Activated CD8-positive, alpha-beta T cell treated with anti-CD3 and anti-CD28 coated beads for 36 hours (primary cell): ENCODE measurements at regions of chr3 and their contacts with region 1.

Region 1: DNA sequence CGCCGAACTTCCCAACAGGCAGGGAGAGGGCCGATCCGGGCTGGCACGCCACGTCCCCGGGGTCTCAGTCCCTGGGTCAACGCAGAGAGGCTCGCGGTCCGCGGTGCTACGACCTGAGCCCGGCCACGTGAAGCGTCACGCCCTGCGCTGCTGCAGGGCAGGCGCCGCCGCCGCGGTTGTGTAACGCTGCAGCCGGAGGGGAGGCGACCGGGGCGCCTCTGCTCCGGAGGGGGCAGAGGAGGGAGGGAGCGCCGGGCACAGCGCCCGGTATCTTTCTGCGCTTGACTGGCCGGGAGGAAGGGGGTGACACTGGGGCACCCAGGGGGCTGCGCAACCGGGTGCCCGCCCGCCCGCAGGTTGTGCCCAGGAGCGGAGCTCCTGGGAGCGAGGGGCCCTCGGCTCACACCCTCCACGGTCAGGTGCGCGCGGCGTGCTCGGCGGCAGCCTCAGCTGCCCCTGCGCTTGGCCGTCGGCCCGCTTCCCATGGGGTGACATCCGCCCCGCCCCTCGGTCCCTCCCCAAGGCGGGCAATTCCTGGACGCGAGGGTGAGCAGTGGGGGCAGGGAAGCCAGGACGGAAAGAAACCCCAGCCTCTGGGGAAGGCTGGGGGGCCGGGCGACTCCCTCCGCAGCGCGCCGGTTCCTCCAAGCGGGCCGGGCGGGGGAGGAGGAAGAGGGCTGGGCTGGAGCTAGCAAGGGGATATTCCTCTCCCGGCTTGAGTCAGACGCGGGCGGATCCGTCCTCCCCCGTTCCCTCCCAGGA is 852 bp upstream of the BHLHE40 start:
- DNase-seq: peak; percentile 98
- ATAC-seq: peak; percentile 57
- H3K4me3 Mint-ChIP-seq: peak overlapping the region; percentile 92
- H3K27ac Mint-ChIP-seq: peak overlapping the region; percentile 96
- H3K4me1 Mint-ChIP-seq: peaks cover 34% of the 10 kb centered on the region
- H3K27me3 Mint-ChIP-seq: no peaks in the 10 kb centered on the region
- CTCF ChIP-seq: no peak

Region 2: DNA sequence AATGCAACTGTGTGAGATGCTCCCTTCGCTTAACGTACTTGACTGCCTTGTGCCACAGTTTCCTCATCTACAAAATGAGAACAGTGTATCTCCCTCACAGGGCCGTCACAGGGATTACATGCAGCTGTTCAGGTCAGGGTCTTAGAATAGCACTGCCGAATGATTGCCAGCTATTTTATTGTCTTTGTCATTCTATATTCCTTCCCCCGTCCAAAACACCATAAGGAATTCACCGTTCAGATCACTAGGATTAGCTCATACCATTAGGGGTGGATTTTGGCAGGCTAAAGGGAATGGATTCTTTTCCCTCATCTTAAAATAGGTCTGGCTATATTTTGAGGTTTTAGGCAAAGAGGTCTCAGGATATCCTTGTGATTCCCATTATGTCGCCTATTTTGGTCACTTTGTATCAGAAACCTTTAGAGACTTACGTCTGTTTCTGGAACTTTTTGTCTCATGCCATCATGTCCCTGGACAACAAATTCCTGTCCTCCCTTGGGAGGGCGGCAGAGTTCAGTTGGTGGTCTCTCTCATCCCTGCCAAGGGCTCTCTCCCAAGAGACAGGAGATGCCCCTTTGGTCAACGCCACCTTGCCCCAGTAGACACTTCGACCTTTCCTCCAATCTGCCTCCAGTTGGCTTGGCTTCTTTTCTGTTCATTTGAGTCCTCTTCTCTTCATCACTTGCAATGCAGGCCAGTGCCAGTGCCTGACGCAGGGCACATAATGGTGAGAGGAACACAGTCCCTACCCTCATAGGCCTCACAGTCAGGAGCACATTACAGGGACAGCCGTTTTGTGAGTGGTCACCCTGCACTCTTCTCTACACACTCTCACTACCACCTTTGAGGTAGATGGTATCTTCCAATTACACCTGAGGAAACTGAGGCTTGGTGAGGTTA is 170.8 kb before region 1 on chr3:
- CTCF ChIA-PET with region 1: interaction called, 8 read pairs
- POLR2A ChIA-PET with region 1: interaction called, 14 read pairs
- intact Hi-C with region 1: no loop called
- DNase-seq: no peak
- ATAC-seq: no peak
- H3K4me3 Mint-ChIP-seq: no peak overlapping the region
- H3K27ac Mint-ChIP-seq: no peak overlapping the region
- H3K4me1 Mint-ChIP-seq: peaks cover 36% of the 10 kb centered on the region
- H3K27me3 Mint-ChIP-seq: no peaks in the 10 kb centered on the region
- CTCF ChIP-seq: no peak

Region 3: GRCh38 chr3:4866841-4867240 is 111.5 kb before region 1 on chr3:
- CTCF ChIA-PET with region 1: interaction called, 22 read pairs
- POLR2A ChIA-PET with region 1: interaction called, 8 read pairs
- intact Hi-C with region 1: no loop called
- DNase-seq: no peak
- ATAC-seq: no peak
- H3K4me3 Mint-ChIP-seq: peak overlapping the region; percentile 86
- H3K27ac Mint-ChIP-seq: peak overlapping the region; percentile 96
- H3K4me1 Mint-ChIP-seq: peaks cover 38% of the 10 kb centered on the region
- H3K27me3 Mint-ChIP-seq: no peaks in the 10 kb centered on the region
- CTCF ChIP-seq: no peak

Region 4: DNA sequence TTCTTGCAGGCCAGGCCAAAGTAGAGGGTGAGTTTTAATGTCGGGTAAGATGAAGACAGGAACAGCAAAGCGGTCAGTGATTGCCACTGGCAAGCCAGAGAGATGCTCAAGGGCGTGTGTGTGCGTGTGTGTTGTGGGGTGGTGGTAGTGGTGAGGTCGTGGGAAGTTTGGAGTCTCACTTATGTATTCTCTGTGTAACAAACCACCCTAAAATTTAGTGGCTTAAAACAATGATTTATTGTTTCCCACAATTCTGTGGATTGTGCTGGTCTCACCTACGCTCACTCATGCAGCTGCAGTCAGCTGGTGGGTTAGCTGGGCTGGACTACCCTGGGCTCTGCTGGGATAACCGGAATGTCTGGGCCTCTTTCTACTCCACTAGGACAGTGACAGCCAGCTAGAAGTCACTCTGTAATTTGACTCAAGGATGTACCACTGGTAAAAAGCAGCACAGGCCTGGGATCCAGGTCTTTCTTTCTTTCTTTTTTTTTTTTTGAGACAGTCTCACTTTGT is 50.1 kb before region 1 on chr3:
- CTCF ChIA-PET with region 1: interaction called, 4 read pairs
- POLR2A ChIA-PET with region 1: interaction called, 3 read pairs
- intact Hi-C with region 1: loop called (anchors 5 kb)
- DNase-seq: peak; percentile 55
- ATAC-seq: peak; percentile 18
- H3K4me3 Mint-ChIP-seq: no peak overlapping the region
- H3K27ac Mint-ChIP-seq: peak overlapping the region; percentile 35
- H3K4me1 Mint-ChIP-seq: peaks cover 29% of the 10 kb centered on the region
- H3K27me3 Mint-ChIP-seq: no peaks in the 10 kb centered on the region
- CTCF ChIP-seq: no peak

Region 5: DNA sequence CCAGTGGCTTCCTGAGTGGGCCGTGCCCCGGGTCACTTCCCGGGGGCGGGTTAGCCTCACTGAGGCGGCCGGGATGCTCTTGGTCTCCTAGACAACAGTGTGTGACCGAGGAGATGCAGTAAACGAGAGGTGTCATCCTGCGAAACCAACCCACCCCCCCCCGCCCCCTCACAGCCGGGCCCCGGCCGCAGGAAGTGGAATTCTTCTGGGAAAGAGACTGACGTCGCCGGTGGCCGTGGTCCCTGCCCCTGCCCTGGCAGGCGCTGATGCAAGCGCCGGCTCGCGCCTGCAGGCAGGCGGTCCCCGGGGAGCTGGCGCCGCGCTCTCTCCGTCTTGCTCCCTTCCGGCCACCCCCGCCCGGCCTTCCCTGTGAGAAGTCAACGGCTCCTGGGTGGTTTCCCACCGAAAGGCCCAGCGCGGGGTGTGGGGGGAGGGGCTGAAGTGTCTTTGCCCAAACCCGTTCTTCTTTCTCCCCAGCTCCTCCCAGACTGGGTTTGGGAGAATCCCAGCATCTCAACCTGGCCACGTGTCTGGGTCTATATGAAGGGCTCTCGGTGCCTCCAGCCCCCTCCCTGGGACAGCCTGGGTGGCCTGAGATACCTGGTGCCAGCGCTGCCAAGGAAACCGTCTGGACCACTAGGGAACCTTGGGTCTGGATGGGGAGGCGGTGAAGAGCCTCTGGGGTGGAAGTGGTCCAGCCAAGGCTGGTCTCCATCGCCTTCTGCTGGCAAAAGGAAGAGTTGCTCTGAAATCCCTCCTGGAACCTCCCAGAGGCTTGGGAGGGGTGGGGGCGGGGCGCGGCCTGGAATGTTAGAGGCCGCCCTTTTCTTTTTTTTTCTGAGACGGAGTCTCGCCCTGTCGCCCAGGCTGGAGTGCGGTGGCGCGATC is 48.2 kb after region 1 on chr3:
- CTCF ChIA-PET with region 1: interaction called, 110 read pairs
- POLR2A ChIA-PET with region 1: interaction called, 276 read pairs
- intact Hi-C with region 1: loop called (anchors 5 kb)
- DNase-seq: peak; percentile 83
- ATAC-seq: peak; percentile 60
- H3K4me3 Mint-ChIP-seq: peak overlapping the region; percentile 67
- H3K27ac Mint-ChIP-seq: peak overlapping the region; percentile 86
- H3K4me1 Mint-ChIP-seq: peaks cover 53% of the 10 kb centered on the region
- H3K27me3 Mint-ChIP-seq: peaks cover 9% of the 10 kb centered on the region
- CTCF ChIP-seq: peak; percentile 39